ENCODE measurements at regions of chr11 and their contacts with region 1.

Region 1: GRCh38 chr11:119878990-119879389 is 150.0 kb upstream of the NECTIN1 start:
- DNase-seq: no peak
- H3K4me3 ChIP-seq: no peak overlapping the region
- H3K27ac ChIP-seq: no peak overlapping the region
- H3K4me1 ChIP-seq: no peaks in the 10 kb centered on the region
- H3K27me3 ChIP-seq: peaks cover 81% of the 10 kb centered on the region
- CTCF ChIP-seq: no peak

Region 2: GRCh38 chr11:119816660-119817059 is 62.3 kb before region 1 on chr11:
- CTCF ChIA-PET with region 1: no interaction called
- POLR2A ChIA-PET with region 1: no interaction called
- intact Hi-C with region 1: no loop called
- DNase-seq: no peak
- H3K4me3 ChIP-seq: no peak overlapping the region
- H3K27ac ChIP-seq: no peak overlapping the region
- H3K4me1 ChIP-seq: no peaks in the 10 kb centered on the region
- H3K27me3 ChIP-seq: peaks cover 81% of the 10 kb centered on the region
- CTCF ChIP-seq: no peak

Region 3: GRCh38 chr11:119952441-119952840 is 73.5 kb after region 1 on chr11:
- CTCF ChIA-PET with region 1: no interaction called
- POLR2A ChIA-PET with region 1: interaction called, 10 read pairs
- intact Hi-C with region 1: no loop called
- DNase-seq: no peak
- H3K4me3 ChIP-seq: no peak overlapping the region
- H3K27ac ChIP-seq: no peak overlapping the region
- H3K4me1 ChIP-seq: no peaks in the 10 kb centered on the region
- H3K27me3 ChIP-seq: peaks cover 80% of the 10 kb centered on the region
- CTCF ChIP-seq: no peak

Region 4: GRCh38 chr11:119964136-119965025 is 85.4 kb after region 1 on chr11:
- CTCF ChIA-PET with region 1: no interaction called
- POLR2A ChIA-PET with region 1: no interaction called
- intact Hi-C with region 1: no loop called
- DNase-seq: peak in 1 of 2 experiments; percentile 40
- H3K4me3 ChIP-seq: no peak overlapping the region
- H3K27ac ChIP-seq: no peak overlapping the region
- H3K4me1 ChIP-seq: 0 out of 2 replicates have a peak, but pooled peaks cover 5% of the 10 kb centered on the region
- H3K27me3 ChIP-seq: peaks cover 84% of the 10 kb centered on the region
- CTCF ChIP-seq: no peak

Measured in PC-9 (cell line).